ENCODE measurements at regions of chr15 and their contacts with region 1.

Region 1: DNA sequence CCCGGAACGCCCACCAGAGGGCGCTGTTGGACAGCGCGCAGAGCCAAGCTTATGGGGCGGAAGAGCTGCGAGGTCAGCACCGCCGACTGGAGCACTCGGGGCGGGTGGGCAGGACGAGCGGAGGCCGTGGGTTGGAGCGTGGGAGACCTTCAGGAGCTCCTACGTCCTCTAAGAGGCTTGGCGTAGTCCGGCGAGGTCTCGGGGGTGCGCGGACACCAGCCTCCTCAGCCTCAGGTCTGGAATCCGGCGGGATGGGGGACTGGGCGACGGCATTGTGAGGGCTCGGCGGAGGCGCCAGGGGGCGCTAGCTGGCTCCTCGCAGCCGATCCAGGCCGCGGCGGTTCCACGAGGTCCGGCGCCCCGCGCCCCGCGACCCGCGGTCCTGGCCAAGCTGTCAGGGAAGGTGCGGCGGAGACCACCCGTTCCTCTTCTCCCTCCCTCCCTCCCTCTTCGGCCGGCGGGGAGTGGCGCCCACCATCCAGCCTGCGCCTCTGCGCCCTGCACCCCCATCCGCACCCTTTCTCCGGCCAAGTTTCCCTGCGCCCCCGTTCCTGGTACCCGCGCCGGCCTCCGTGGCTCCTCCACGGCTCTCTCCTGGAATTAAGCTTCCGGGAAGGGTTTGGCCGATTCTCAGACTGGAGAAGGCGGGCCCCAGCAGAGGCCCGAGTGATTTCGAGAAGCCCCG is 24.3 kb upstream of the POLG start:
- DNase-seq: peak; percentile 85
- H3K4me3 Mint-ChIP-seq: peak overlapping the region; percentile 79
- H3K27ac Mint-ChIP-seq: no peak overlapping the region
- H3K4me1 Mint-ChIP-seq: peaks cover 12% of the 10 kb centered on the region
- H3K27me3 Mint-ChIP-seq: peaks cover 82% of the 10 kb centered on the region

Region 2: GRCh38 chr15:89334510-89335288 is 24.2 kb before region 1 on chr15 and contains the start of gene POLG:
- CTCF ChIA-PET with region 1: interaction called, 47 read pairs
- POLR2A ChIA-PET with region 1: interaction called, 5 read pairs
- DNase-seq: peak; percentile 99
- H3K4me3 Mint-ChIP-seq: peak within 1 kb of the TSS; percentile 84
- H3K27ac Mint-ChIP-seq: peak within 1 kb of the TSS; percentile 93
- H3K4me1 Mint-ChIP-seq: peaks cover 53% of the 10 kb centered on the region
- H3K27me3 Mint-ChIP-seq: peaks cover 8% of the 10 kb centered on the region
- total RNA-seq, gene POLG: 106 to 109 TPM

Region 3: GRCh38 chr15:89378296-89379151 is 19.6 kb after region 1 on chr15:
- CTCF ChIA-PET with region 1: interaction called, 48 read pairs
- POLR2A ChIA-PET with region 1: no interaction called
- DNase-seq: no peak
- H3K4me3 Mint-ChIP-seq: peak overlapping the region; percentile 22
- H3K27ac Mint-ChIP-seq: no peak overlapping the region
- H3K4me1 Mint-ChIP-seq: no peaks in the 10 kb centered on the region
- H3K27me3 Mint-ChIP-seq: peaks cover 86% of the 10 kb centered on the region

Region 4: GRCh38 chr15:89406940-89407607 is 48.2 kb after region 1 on chr15:
- CTCF ChIA-PET with region 1: interaction called, 51 read pairs
- POLR2A ChIA-PET with region 1: no interaction called
- DNase-seq: no peak
- H3K4me3 Mint-ChIP-seq: peak overlapping the region; percentile 41
- H3K27ac Mint-ChIP-seq: peak overlapping the region; percentile 44
- H3K4me1 Mint-ChIP-seq: peaks cover 57% of the 10 kb centered on the region
- H3K27me3 Mint-ChIP-seq: peaks cover 92% of the 10 kb centered on the region

Region 5: GRCh38 chr15:89423981-89424380 is 65.1 kb after region 1 on chr15:
- CTCF ChIA-PET with region 1: interaction called, 142 read pairs
- POLR2A ChIA-PET with region 1: no interaction called
- DNase-seq: no peak
- H3K4me3 Mint-ChIP-seq: no peak overlapping the region
- H3K27ac Mint-ChIP-seq: no peak overlapping the region
- H3K4me1 Mint-ChIP-seq: no peaks in the 10 kb centered on the region
- H3K27me3 Mint-ChIP-seq: peaks cover 38% of the 10 kb centered on the region

Region 6: DNA sequence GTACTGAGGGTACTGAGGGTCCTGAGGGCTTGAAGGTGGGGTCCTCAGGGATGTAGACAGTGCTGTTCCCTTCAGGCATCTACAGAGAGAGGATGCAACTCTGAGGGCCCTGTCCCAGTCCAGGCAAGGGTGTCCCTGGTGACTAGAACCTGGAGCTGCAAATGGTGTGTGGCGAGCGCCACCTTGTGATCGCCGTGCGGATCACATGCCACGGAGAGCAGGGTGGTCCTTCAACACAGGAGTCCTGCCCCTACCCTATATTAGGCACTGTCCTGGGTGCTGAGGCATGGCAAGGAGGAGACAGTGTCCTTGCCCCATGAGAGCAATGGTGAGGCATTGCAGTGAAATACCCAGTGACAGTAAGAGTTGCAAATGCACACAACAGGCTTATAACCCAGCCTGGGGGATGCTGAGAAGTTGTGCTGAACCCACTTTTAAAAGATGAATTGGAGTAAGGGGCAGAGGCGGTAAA is 113.9 kb after region 1 on chr15:
- CTCF ChIA-PET with region 1: interaction called, 28 read pairs
- POLR2A ChIA-PET with region 1: no interaction called
- DNase-seq: peak; percentile 61
- H3K4me3 Mint-ChIP-seq: no peak overlapping the region
- H3K27ac Mint-ChIP-seq: no peak overlapping the region
- H3K4me1 Mint-ChIP-seq: no peaks in the 10 kb centered on the region
- H3K27me3 Mint-ChIP-seq: peaks cover 24% of the 10 kb centered on the region

Measured in activated CD4-positive, alpha-beta memory T cell treated with anti-CD3 and anti-CD28 coated beads, Interleukin-2, amount 10 ng/mL, durations not matched to agents 7 days and 5 days (primary cell).